Cardiac septum (tissue), 1 donor: ENCODE measurements at regions of chr12 and their contacts with region 1.

Region 1: DNA sequence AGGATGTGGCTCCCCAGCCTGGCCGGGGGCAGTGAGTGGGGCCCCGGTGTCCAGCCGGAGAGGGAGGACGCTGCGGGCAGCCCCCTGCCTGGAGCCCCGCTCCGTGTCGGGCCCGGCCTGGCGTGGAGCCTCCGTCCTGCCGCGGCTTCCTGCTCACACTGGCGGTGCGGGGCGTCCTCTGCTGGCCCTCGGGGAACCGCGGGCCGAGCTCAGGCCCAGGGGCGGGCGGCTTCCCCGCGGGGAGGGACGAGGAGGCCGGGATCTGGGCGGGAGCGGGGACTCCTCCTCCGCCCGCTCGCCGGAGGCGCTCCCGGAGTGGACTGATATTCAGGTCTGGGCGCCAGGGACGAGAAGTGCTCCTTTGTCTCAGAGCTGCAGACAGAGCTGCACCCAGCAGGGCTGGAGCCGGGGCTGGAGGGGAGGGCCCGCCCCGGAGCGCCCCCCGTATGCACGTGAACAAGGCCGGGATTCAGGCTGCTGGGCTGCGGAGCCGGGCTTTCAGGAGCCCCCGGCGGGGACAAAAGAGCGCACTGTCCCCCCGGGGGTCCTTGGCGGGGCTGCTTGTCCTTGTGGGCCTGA is 2.2 kb downstream of the MMP17 start:
- DNase-seq: peak; percentile 85

Region 2: GRCh38 chr12:131104463-131105350 is 725.7 kb before region 1 on chr12:
- intact Hi-C with region 1: loop called (anchors 10 kb)
- DNase-seq: peak; percentile 89

Region 3: DNA sequence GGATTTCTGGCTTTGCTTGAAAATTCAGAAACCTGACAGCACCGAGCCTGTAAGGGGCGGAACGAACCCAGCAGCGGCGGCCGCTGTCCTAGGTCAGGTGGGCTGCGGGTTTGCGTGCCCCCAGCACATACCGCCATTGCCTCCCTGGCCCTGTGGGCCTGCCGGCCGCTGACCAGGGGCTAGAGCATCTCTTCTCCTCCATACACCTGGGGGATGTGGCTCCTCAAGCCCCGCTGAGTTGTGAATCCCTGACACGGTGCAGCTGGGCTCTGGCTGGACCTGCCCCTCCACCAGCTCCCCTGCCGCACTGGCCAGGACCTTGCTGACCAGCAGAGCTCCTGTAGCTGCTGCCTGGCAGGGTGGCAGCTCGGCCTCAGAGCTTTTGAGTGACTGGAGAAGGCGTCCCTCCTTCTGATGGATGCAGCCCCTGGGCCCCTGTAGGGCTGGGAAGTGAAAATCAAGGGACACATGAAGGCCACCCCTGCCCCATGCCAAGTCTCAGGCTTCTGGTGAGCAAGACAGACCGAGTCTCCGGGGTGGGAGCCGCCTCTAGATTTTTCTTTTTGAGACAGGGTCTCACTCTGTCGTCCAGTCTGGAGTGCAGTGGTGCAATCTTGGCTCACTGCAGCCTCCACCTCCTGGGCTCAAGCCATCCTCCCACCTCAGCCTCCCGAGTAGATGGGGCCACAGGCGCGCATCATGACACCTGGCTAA is 304.5 kb before region 1 on chr12:
- intact Hi-C with region 1: no loop called
- DNase-seq: no peak

Region 4: GRCh38 chr12:131608740-131609690 is 221.4 kb before region 1 on chr12:
- intact Hi-C with region 1: loop called (anchors 10 kb)
- DNase-seq: peak; percentile 87

Region 5: DNA sequence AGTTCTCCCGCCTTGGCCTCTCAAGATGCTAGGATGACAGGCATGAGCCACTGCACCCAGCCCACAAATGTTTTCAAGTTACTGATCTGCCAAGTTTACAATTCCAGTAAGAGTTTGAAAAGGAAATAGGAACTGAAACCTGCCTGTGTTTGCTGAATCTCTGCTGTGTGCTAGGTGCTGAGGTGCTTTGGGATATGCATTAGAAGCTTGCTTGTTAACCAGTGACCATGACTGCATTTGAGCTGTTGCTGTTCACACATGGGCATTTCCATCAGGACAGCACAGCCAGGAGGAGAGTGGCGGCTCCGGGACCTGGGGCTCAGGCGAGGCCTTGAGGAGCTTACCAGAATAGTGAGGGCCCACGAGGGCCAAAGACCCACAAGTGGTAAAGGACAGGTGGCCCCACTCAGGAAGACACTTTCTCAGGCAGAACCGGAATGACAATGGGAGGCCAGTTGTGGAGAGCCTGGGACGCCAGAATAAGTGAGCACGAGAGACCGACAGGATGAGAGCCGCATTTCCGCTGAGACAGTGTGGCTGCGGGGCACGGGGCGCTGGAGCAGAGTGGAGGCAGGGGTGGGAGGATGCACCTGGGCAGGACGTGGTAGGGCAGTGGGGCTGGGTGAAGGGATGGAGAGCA is 56.7 kb before region 1 on chr12:
- intact Hi-C with region 1: no loop called
- DNase-seq: peak; percentile 69

Region 6: DNA sequence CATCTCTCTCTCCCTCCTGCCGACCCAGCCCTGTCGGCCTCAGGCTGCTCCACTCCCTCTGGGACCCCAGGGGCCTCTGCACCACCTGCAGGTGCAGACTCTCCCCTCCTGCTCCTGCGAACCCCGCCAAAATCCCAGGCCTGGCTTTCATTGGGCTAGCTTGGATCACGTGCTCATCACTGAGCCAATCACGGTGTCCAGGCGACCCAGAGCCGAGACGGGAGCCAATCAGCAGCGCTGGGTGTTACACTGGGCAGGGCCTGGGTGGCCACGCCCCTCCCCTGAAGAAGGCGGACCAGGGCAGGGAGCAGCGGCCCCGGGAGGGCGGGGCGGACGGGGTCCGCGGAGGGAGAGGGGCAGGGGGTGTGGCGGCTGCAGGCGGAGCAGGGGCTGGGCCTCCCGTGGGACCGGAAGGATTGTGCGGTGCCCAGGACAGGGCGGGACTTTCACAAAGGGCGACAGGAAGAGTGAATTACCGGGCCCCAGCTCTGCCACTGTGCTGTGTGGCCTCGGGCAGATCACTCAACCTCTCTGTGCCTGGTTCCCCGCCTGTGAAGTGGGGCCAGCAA is 592.9 kb after region 1 on chr12:
- intact Hi-C with region 1: no loop called
- DNase-seq: no peak